Gastrocnemius medialis (tissue), 4 donors: ENCODE measurements at regions of chr9 and their contacts with region 1.

Region 1: DNA sequence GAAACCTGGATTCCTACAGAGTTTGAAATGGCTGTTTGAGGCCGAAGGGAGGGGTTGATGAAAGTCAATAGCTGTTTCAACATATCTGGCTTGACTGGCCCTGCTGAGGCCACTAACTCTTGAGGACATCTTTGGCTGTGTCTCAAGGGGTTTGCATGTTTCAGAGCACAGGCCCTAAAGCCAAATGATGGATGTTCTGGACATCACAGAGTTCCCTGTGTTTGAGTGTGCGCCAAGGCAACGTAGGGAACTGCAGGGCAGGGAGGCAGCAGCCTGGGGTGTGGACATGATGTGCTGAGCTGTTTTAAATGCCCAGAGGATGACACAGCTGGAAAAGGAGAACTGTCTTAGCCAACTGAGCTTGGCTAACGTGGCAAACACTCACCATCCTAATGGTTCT is 89.6 kb downstream of the RAPGEF1 start:
- DNase-seq: peak; percentile 96 to 99
- ATAC-seq: peak; percentile 88 to 90
- H3K4me3 ChIP-seq: no peak overlapping the region
- H3K27ac ChIP-seq: peak overlapping the region; percentile 85 to 90 (median 88)
- H3K4me1 ChIP-seq: peaks cover 63 to 64% of the 10 kb centered on the region in 2 donors
- H3K27me3 ChIP-seq: no peaks in the 10 kb centered on the region
- CTCF ChIP-seq: peak in 2 of 5 experiments; percentile 11 to 25
- POLR2A ChIP-seq: no peak

Region 2: DNA sequence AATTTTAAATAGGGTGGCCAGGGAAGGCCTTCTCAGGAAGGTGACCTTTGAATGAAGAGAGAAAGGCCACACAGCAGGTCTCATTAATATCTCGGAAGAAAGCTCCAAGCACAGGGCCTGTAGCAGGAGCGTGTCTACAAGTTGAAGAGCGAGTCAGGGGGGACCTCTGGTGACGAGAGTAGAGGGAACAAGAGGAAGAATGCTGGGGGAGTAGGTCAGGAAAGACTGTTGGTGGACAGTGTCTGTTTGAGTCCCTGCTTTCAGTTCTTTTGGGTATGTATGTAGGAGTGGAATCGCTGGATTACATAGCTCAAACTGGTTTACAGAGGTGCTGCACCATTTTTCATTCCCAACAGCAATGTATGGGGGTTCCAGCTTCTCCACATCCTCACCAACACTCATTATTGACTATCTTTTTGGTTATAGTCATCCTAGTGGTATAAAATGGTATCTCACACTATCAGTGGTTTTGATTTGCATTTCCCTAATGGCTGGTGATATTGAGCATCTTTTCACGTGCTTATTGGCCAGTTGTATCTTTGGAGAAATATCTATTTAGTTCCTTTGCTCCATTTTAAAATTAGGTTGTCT is 469.1 kb before region 1 on chr9:
- in situ Hi-C with region 1: no loop called
- intact Hi-C with region 1: no loop called
- DNase-seq: no peak
- ATAC-seq: no peak
- H3K4me3 ChIP-seq: no peak overlapping the region
- H3K27ac ChIP-seq: peak overlapping the region in 2 of 4 donors; percentile 1 to 55
- H3K4me1 ChIP-seq: peaks cover 8 to 15% of the 10 kb centered on the region in 2 donors
- H3K27me3 ChIP-seq: no peaks in the 10 kb centered on the region
- CTCF ChIP-seq: peak in 1 of 5 experiments; percentile 33
- POLR2A ChIP-seq: no peak

Region 3: GRCh38 chr9:131432597-131433306 is 217.5 kb before region 1 on chr9:
- in situ Hi-C with region 1: no loop called
- intact Hi-C with region 1: no loop called
- DNase-seq: no peak
- ATAC-seq: peak in 1 of 2 donors; percentile 25
- H3K4me3 ChIP-seq: no peak overlapping the region
- H3K27ac ChIP-seq: no peak overlapping the region
- H3K4me1 ChIP-seq: peaks cover 11 to 23% of the 10 kb centered on the region in 2 donors
- H3K27me3 ChIP-seq: no peaks in the 10 kb centered on the region
- CTCF ChIP-seq: no peak
- POLR2A ChIP-seq: no peak

Region 4: DNA sequence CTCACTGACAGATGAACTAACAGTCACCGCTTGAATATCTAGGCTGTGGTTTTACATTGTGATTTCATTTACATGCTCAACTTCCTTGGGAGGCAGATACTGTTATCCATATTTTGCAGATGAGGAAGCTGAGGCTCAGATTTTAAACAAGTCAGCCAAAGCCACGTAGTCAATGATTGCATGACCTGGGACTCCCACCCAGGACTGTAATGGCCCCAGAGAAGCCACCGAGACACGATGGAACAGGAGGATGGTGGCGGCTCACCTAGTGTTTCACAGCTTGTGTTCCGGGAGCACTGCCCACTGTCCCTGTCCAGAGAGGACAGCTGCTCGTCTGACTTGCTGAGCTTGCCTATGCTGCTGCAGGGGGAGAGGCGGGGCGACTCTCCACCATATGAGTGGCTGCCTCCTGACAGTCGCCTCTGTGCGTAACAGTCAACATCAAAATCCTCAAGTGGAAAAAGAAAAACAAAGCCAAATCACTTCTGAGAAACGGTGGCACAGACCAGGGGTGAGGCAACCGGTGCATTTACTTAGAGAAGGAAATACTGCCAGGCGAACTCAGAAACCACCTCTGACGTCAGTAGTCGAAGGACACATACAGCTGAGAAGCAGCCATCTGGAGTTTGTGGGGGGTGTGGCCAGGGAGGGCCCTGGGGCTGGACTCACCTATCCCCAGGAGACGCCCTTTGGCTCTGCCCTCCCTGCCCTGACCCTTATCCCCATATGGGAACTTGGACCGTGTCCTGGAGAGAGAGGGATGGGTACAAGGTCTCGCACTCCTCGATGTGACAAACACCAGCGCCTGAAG is 22.4 kb before region 1 on chr9:
- in situ Hi-C with region 1: no loop called
- intact Hi-C with region 1: loop called (anchors 1 kb)
- DNase-seq: peak; percentile 89 to 96
- ATAC-seq: peak; percentile 85 to 90
- H3K4me3 ChIP-seq: no peak overlapping the region
- H3K27ac ChIP-seq: peak overlapping the region; percentile 88 to 93 (median 90)
- H3K4me1 ChIP-seq: peaks cover 47 to 50% of the 10 kb centered on the region in 2 donors
- H3K27me3 ChIP-seq: no peaks in the 10 kb centered on the region
- CTCF ChIP-seq: no peak
- POLR2A ChIP-seq: peak; percentile 54 to 69

Region 5: DNA sequence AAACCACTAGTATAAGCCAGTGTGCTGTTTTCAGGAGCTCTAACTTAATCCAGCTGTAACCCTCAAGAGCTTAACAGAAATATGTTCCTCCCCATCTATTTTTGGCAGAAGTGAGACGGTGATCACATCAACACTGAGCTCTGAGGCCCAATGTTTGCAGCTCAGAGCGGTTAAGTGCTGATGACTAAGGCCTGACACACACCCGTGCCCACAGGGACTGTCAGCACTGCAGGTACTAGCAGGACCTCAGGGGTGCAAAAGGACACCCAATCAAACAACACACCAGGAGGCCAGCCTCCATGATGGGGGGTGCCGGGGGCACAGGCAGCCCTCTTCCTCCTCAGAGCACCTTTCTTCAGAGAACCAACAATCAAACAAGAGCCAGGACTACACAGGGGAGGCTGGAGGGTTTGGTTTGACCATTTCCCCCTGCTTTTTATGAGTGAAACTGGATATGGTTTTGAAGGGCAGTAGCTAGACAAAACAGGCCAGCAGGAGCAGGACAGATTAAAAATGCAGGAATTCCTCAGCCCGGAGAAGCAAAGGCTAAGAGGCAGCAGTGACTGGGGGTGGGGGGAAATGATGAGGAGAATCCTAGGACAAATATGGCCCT is 28.4 kb after region 1 on chr9:
- in situ Hi-C with region 1: no loop called
- intact Hi-C with region 1: loop called (anchors 2 kb)
- DNase-seq: peak; percentile 90 to 91
- ATAC-seq: peak; percentile 98 to 99
- H3K4me3 ChIP-seq: peak overlapping the region in 1 of 4 donors; percentile 3
- H3K27ac ChIP-seq: peak overlapping the region; percentile 86 to 93 (median 91)
- H3K4me1 ChIP-seq: peaks cover 62 to 78% of the 10 kb centered on the region in 2 donors
- H3K27me3 ChIP-seq: no peaks in the 10 kb centered on the region
- CTCF ChIP-seq: peak in 1 of 5 experiments; percentile 13
- POLR2A ChIP-seq: peak; percentile 45 to 74

Region 6: GRCh38 chr9:131709771-131710454 is 59.7 kb after region 1 on chr9:
- in situ Hi-C with region 1: no loop called
- intact Hi-C with region 1: loop called (anchors 2 kb)
- DNase-seq: peak; percentile 44 to 65
- ATAC-seq: peak; percentile 56 to 64
- H3K4me3 ChIP-seq: peak overlapping the region in 3 of 4 donors; percentile 11 to 44 (median 37)
- H3K27ac ChIP-seq: peak overlapping the region; percentile 75 to 88 (median 80)
- H3K4me1 ChIP-seq: peaks cover 58 to 83% of the 10 kb centered on the region in 2 donors
- H3K27me3 ChIP-seq: no peaks in the 10 kb centered on the region
- CTCF ChIP-seq: peak in 3 of 5 experiments; percentile 4 to 29 (median 21)
- POLR2A ChIP-seq: peak; percentile 22 to 33

Region 7: GRCh38 chr9:131733541-131734061 is 83.3 kb after region 1 on chr9:
- in situ Hi-C with region 1: loop called in 3 of 4 experiments (anchors 10 kb)
- intact Hi-C with region 1: loop called (anchors 2 kb)
- DNase-seq: peak; percentile 83 to 96
- ATAC-seq: peak; percentile 76 to 83
- H3K4me3 ChIP-seq: peak overlapping the region in 1 of 4 donors; percentile 11
- H3K27ac ChIP-seq: peak overlapping the region; percentile 80 to 90 (median 88)
- H3K4me1 ChIP-seq: peaks cover 89 to 90% of the 10 kb centered on the region in 2 donors
- H3K27me3 ChIP-seq: no peaks in the 10 kb centered on the region
- CTCF ChIP-seq: no peak
- POLR2A ChIP-seq: peak; percentile 44 to 57

Region 8: DNA sequence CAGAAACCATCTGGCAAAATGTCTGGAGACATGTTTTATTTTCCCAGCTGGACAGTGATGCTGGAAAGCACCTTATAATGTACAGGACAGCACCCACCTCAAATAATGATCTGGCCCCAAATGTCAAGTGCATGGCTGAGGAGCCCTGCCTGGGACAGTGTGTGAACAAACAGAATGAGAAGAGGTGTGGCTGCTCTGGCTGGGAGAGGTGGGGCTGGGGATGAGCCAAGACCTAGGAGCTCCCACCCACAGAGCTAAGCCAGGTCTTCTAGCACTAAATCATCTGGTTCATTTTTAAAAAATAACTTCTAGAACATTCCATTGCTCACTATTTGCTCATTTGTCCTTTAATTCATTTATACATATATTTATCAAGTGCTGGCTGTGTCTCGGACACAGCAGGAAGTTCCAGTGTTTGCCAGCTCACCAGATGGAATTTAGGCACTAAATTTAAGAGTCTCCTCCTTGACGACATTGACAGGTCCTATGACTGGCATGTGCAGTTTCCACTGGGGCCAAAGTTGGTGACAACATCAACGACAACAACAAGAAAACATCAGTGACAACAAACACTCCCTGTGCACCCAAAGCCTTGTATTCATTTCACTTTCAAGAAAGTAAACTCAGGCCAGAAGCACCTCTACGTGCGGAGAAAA is 1079.1 kb after region 1 on chr9:
- in situ Hi-C with region 1: no loop called
- intact Hi-C with region 1: no loop called
- DNase-seq: no peak
- ATAC-seq: no peak
- H3K4me3 ChIP-seq: no peak overlapping the region
- H3K27ac ChIP-seq: no peak overlapping the region
- H3K4me1 ChIP-seq: no peaks in the 10 kb centered on the region
- H3K27me3 ChIP-seq: peaks cover 0 to 14% (median 8%) of the 10 kb centered on the region in 3 donors
- CTCF ChIP-seq: no peak
- POLR2A ChIP-seq: no peak